K562 (cell line): ENCODE measurements at regions of chr2 and their contacts with region 1.

Region 1: DNA sequence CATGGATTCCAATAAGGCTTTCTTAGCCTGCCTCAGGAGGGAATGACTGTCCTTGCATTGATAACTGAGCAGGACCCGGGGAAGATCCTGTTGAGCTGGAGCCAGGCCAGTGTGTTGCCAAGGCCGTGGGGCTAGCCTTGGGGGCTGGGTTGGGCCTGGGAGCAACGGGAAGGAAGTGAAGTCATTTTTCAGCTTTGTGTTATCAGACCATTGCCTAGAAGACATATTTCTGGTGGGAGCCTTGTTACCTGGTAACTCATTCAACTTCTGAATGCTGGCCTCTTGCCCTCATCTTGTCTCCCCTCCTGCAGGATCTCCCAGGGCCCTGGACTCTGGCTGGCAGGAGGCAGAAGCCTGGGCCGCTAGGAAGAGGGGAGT is 92.7 kb upstream of the MGAT5 start:
- DNase-seq: peak; percentile 22 to 81 (median 40)
- ATAC-seq: peak; percentile 86
- H3K4me3 ChIP-seq: no peak overlapping the region
- H3K27ac ChIP-seq: peak overlapping the region; percentile 56; the same call in 2 of the 3 replicates
- H3K4me1 ChIP-seq: peaks cover 22 to 24% of the 10 kb centered on the region in 2 experiments
- H3K27me3 ChIP-seq: no peaks in the 10 kb centered on the region
- CTCF ChIP-seq: no peak
- EP300 ChIP-seq: no peak; the same call in 1 of the 2 replicates
- POLR2A ChIP-seq: no peak
- RAD21 ChIP-seq: no peak

Region 2: DNA sequence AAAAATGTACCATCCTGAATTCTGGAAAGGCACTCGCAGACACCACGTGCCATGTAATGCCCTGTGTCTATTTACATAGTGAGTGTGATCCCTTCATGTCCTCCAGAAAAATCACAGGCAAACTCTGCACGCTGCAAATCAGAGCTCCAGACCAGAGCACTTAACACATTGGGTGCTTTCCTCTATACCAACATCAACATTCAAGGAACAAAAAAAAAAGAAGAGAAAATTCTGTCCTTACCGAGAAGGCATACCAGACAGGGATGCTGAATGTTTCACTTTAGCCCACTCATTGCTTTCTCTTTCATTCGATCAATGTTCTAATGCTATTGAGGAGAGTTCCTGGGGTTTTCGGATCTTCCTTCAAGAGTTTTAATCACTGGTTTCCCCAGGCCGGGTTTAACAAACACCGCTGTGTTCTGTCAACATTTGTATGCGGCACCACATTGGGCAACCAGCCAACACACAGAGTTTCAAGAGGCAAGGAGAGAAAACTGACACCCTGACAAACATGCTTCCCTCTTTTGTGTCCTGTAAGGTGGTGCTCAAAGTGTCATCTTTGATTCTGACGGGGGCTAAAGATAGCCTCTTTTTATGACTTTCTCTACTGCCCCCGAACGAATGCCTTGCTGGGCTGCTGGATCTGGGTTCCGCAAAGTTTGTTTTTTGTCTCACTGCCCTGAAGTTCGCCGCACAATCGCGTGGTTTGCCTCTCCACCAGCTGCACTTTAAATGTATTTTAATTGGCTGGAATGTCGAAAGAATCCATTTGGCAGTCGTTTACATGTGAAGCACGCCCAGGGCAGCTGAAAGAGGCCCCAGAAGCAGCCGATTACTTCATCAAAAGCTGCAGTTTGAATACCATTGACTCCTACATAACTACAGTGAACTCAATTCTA is 486.5 kb before region 1 on chr2:
- CTCF ChIA-PET with region 1: no interaction called
- POLR2A ChIA-PET with region 1: no interaction called
- in situ Hi-C with region 1: no loop called
- intact Hi-C with region 1: no loop called
- DNase-seq: no peak
- ATAC-seq: no peak
- H3K4me3 ChIP-seq: no peak overlapping the region
- H3K27ac ChIP-seq: no peak overlapping the region
- H3K4me1 ChIP-seq: no peaks in the 10 kb centered on the region
- H3K27me3 ChIP-seq: no peaks in the 10 kb centered on the region
- CTCF ChIP-seq: no peak
- EP300 ChIP-seq: no peak
- POLR2A ChIP-seq: no peak
- RAD21 ChIP-seq: no peak

Region 3: DNA sequence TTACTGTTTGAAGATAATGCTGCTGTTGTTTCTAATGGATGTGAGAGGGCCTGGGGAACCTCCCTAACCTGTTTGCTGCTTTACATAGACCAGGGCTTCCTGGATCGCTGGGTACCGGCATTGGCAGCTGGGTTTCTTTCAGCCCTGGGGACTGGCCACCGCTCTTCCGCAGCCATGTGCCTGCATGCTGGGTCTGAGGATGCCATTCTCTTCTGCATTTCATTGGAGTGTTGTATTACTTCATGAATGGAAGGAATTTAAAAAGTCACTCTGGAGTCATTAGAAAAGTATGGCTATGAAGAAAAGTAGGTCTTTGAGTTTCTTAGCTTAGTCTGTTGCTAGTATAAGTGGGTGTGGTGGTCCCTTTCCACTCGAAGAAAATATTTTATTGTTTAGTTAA is 14.5 kb before region 1 on chr2:
- CTCF ChIA-PET with region 1: no interaction called
- POLR2A ChIA-PET with region 1: interaction called, 13 read pairs
- in situ Hi-C with region 1: no loop called
- intact Hi-C with region 1: no loop called
- DNase-seq: no peak
- ATAC-seq: no peak
- H3K4me3 ChIP-seq: no peak overlapping the region
- H3K27ac ChIP-seq: no peak overlapping the region
- H3K4me1 ChIP-seq: peaks cover 18 to 21% of the 10 kb centered on the region in 2 experiments
- H3K27me3 ChIP-seq: no peaks in the 10 kb centered on the region
- CTCF ChIP-seq: no peak
- EP300 ChIP-seq: no peak
- POLR2A ChIP-seq: no peak
- RAD21 ChIP-seq: no peak

Region 4: DNA sequence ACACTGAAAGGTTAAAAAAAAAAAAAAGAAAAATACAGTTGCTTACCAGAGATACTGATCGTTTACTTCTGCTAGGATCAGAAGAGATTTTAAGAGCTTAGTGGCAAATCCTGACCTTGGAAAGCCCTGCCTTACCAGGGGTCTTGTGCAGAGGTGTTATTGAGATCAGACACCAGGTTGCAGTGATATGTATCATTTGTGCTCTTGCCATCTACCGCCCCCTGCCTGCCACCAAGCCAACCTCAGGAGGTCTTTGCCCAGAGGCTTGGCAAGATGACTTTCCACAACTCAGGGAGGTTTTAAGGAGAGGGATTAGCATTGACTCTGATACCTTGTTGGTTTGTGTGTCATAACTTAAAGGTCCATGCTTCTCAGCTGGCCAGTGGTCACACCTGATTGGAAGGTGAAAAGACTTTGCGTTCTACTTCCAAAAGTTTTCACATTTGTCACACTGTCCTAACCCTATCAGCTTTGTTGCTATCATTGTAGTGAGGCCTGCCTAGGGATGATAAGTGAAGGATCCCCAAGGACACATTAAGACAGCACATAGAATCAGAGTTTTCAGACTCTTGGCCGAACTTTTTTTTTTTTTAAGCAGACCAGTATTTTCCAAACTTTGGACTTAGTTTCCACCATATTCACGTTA is 46.5 kb after region 1 on chr2:
- CTCF ChIA-PET with region 1: no interaction called
- POLR2A ChIA-PET with region 1: no interaction called
- in situ Hi-C with region 1: no loop called
- intact Hi-C with region 1: loop called (anchors 5 kb)
- DNase-seq: peak; percentile 49 to 66 (median 56)
- ATAC-seq: peak; percentile 99
- H3K4me3 ChIP-seq: no peak overlapping the region
- H3K27ac ChIP-seq: no peak overlapping the region
- H3K4me1 ChIP-seq: peaks cover 0 to 23% of the 10 kb centered on the region in 2 experiments; a peak in 3 of 5 replicates
- H3K27me3 ChIP-seq: no peaks in the 10 kb centered on the region
- CTCF ChIP-seq: peak; percentile 78 to 84 (median 80)
- EP300 ChIP-seq: no peak; the same call in 1 of the 2 replicates
- POLR2A ChIP-seq: no peak
- RAD21 ChIP-seq: peak; percentile 85 to 88

Region 5: GRCh38 chr2:134218930-134219658 is 57.9 kb after region 1 on chr2:
- CTCF ChIA-PET with region 1: no interaction called
- POLR2A ChIA-PET with region 1: no interaction called
- in situ Hi-C with region 1: no loop called
- intact Hi-C with region 1: no loop called
- DNase-seq: peak in 1 of 4 experiments; percentile 32
- ATAC-seq: peak; percentile 53
- H3K4me3 ChIP-seq: no peak overlapping the region
- H3K27ac ChIP-seq: no peak overlapping the region
- H3K4me1 ChIP-seq: peaks cover 4 to 21% of the 10 kb centered on the region in 2 experiments; a peak in 3 of 5 replicates
- H3K27me3 ChIP-seq: no peaks in the 10 kb centered on the region
- CTCF ChIP-seq: no peak
- EP300 ChIP-seq: no peak
- POLR2A ChIP-seq: no peak
- RAD21 ChIP-seq: no peak

Region 6: GRCh38 chr2:134232868-134233727 is 71.9 kb after region 1 on chr2:
- CTCF ChIA-PET with region 1: no interaction called
- POLR2A ChIA-PET with region 1: no interaction called
- in situ Hi-C with region 1: no loop called
- intact Hi-C with region 1: no loop called
- DNase-seq: no peak
- ATAC-seq: no peak
- H3K4me3 ChIP-seq: no peak overlapping the region
- H3K27ac ChIP-seq: no peak overlapping the region
- H3K4me1 ChIP-seq: peaks cover 0 to 8% of the 10 kb centered on the region in 2 experiments; a peak in 1 of 5 replicates
- H3K27me3 ChIP-seq: no peaks in the 10 kb centered on the region
- CTCF ChIP-seq: no peak
- EP300 ChIP-seq: no peak
- POLR2A ChIP-seq: no peak
- RAD21 ChIP-seq: no peak